Naive thymus-derived CD4-positive, alpha-beta T cell (primary cell): ENCODE measurements at regions of chr4 and their contacts with region 1.

Region 1: DNA sequence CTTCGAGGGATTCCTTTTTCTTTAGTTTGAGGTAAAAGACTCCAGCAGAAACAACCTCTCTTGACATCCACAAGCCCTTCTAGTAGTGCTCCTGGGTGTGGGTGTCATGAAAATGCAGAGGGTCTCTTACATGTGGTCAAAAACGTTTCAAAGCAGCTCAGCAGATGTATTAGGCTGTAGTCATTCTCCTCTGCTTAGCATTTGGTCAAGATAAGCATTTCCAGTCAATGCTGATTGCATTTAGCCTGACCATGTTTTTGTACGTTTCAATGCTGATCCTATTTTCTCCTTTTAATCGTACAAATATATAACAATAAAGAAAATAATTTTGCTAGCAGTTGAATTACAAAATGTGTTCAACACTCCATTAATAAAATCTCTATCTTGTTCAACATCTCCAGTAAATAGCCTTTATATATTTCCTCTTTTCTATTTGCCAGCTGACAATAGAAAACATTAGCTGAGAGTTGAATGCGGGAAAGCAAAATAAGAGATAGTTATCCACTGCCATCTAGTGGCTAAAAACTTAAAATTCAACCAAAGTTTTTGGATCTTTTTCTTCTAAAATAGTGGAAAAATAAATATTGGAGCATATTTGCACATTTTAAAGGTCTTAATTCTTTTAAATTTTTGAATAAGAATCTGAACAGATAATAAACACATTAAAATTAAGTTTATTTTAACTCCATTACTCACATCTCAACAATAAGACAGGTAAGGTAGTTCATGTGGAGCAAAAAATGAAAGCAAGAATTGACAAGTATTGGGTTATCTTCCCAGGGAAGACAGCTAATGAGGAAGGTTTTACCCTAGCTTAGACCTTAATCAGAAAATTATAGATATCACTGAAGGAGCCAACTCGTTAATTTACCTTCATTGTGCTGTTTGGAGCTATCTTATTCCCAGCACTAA is 15.2 kb upstream of the PACRGL start:
- DNase-seq: peak in 4 of 9 donors; percentile 7 to 27 (median 24)
- ATAC-seq: peak; percentile 37
- H3K4me3 ChIP-seq: no peak overlapping the region
- H3K4me3 Mint-ChIP-seq: no peak overlapping the region
- H3K27ac ChIP-seq: no peak overlapping the region
- H3K27ac Mint-ChIP-seq: no peak overlapping the region
- H3K4me1 ChIP-seq: no peaks in the 10 kb centered on the region
- H3K4me1 Mint-ChIP-seq: no peaks in the 10 kb centered on the region
- H3K27me3 ChIP-seq: peaks cover 0 to 3% of the 10 kb centered on the region in 2 donors
- H3K27me3 Mint-ChIP-seq: peaks cover 0 to 17% (median 14%) of the 10 kb centered on the region in 5 donors

Region 2: DNA sequence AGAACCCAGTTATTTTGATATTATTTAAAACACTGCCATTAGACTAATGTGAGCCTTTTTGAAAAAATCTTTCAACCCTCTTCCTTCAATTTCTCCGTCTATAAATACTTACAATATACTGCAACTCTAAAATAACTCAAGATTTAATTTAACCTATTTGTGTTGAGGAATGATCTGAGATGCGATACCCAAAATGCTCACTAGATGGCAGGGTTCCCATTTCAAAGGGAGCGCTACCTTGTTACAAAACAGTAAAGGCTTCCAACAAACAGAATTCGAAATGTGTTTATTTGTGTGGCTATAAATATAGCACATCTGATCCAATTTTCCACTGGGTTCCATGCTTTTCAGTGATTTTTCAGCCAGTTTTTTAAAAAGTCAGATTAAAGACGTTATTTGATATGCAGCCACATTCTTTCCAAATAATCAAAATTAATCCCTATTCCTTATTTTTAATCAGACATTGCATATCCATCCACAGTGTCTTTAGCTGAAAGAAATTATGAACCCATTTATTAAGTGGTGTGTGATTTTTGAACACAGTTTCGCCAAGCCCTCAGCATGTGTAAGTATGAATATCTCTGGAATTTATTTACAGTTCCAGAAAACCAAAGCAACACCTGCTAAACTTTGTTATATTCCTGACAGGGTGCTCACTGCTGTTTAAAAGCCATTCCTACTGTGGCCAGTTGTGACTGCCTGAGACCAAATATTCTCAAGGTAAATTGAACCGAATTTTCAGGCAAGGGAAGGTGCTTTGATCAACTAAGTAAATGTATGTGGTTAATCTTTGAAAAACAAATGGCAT is 1995.6 kb before region 1 on chr4:
- CTCF ChIA-PET with region 1: no interaction called
- POLR2A ChIA-PET with region 1: no interaction called
- intact Hi-C with region 1: loop called in 1 of 2 experiments (anchors 2 kb)
- DNase-seq: peak in 8 of 9 donors; percentile 3 to 28 (median 14)
- ATAC-seq: no peak
- H3K4me3 ChIP-seq: no peak overlapping the region
- H3K4me3 Mint-ChIP-seq: no peak overlapping the region
- H3K27ac ChIP-seq: no peak overlapping the region
- H3K27ac Mint-ChIP-seq: no peak overlapping the region
- H3K4me1 ChIP-seq: no peaks in the 10 kb centered on the region
- H3K4me1 Mint-ChIP-seq: no peaks in the 10 kb centered on the region
- H3K27me3 ChIP-seq: peaks cover 3 to 10% of the 10 kb centered on the region in 2 donors
- H3K27me3 Mint-ChIP-seq: peaks cover 7 to 21% (median 9%) of the 10 kb centered on the region in 5 donors

Region 3: GRCh38 chr4:19224820-19225219 is 1460.3 kb before region 1 on chr4:
- CTCF ChIA-PET with region 1: no interaction called
- POLR2A ChIA-PET with region 1: no interaction called
- intact Hi-C with region 1: loop called in 1 of 2 experiments (anchors 5 kb)
- DNase-seq: no peak
- ATAC-seq: no peak
- H3K4me3 ChIP-seq: no peak overlapping the region
- H3K4me3 Mint-ChIP-seq: no peak overlapping the region
- H3K27ac ChIP-seq: no peak overlapping the region
- H3K27ac Mint-ChIP-seq: no peak overlapping the region
- H3K4me1 ChIP-seq: no peaks in the 10 kb centered on the region
- H3K4me1 Mint-ChIP-seq: no peaks in the 10 kb centered on the region
- H3K27me3 ChIP-seq: no peaks in the 10 kb centered on the region
- H3K27me3 Mint-ChIP-seq: no peaks in the 10 kb centered on the region

Region 4: DNA sequence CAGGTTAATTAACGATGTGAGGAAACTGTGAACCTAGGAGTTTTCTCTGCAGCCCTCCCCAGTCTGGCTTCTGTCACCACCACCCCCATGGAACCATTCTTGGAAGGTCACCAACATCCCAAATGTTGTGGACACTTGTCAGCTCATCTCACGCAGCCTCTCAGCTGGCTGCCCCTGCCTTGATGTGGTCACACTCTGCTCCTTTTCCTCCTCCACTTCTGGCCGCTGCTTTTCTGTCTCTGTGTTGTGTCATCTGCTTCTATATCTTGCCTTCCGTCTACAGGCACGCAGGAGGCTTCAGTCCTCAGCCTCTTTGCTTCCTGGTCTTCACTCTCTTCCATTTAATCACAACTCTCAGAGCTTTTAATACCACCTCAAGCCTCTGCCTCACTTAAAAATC is 804.9 kb before region 1 on chr4:
- CTCF ChIA-PET with region 1: no interaction called
- POLR2A ChIA-PET with region 1: no interaction called
- intact Hi-C with region 1: no loop called
- DNase-seq: no peak
- ATAC-seq: no peak
- H3K4me3 ChIP-seq: no peak overlapping the region
- H3K4me3 Mint-ChIP-seq: no peak overlapping the region
- H3K27ac ChIP-seq: no peak overlapping the region
- H3K27ac Mint-ChIP-seq: no peak overlapping the region
- H3K4me1 ChIP-seq: no peaks in the 10 kb centered on the region
- H3K4me1 Mint-ChIP-seq: no peaks in the 10 kb centered on the region
- H3K27me3 ChIP-seq: no peaks in the 10 kb centered on the region
- H3K27me3 Mint-ChIP-seq: no peaks in the 10 kb centered on the region

Region 5: GRCh38 chr4:20395160-20395773 is 289.8 kb before region 1 on chr4:
- CTCF ChIA-PET with region 1: no interaction called
- POLR2A ChIA-PET with region 1: no interaction called
- intact Hi-C with region 1: loop called (anchors 1 kb)
- DNase-seq: no peak
- ATAC-seq: no peak
- H3K4me3 ChIP-seq: no peak overlapping the region
- H3K4me3 Mint-ChIP-seq: no peak overlapping the region
- H3K27ac ChIP-seq: no peak overlapping the region
- H3K27ac Mint-ChIP-seq: no peak overlapping the region
- H3K4me1 ChIP-seq: no peaks in the 10 kb centered on the region
- H3K4me1 Mint-ChIP-seq: no peaks in the 10 kb centered on the region
- H3K27me3 ChIP-seq: no peaks in the 10 kb centered on the region
- H3K27me3 Mint-ChIP-seq: peaks cover 0 to 9% (median 0%) of the 10 kb centered on the region in 5 donors

Region 6: GRCh38 chr4:21765810-21766407 is 1080.8 kb after region 1 on chr4:
- CTCF ChIA-PET with region 1: no interaction called
- POLR2A ChIA-PET with region 1: no interaction called
- intact Hi-C with region 1: loop called in 1 of 2 experiments (anchors 10 kb)
- DNase-seq: peak in 2 of 9 donors; percentile 11 to 12
- ATAC-seq: peak; percentile 59
- H3K4me3 ChIP-seq: no peak overlapping the region
- H3K4me3 Mint-ChIP-seq: no peak overlapping the region
- H3K27ac ChIP-seq: no peak overlapping the region
- H3K27ac Mint-ChIP-seq: peak overlapping the region in 1 of 9 donors; percentile 68
- H3K4me1 ChIP-seq: no peaks in the 10 kb centered on the region
- H3K4me1 Mint-ChIP-seq: peaks cover 0 to 3% (median 0%) of the 10 kb centered on the region in 7 donors
- H3K27me3 ChIP-seq: no peaks in the 10 kb centered on the region
- H3K27me3 Mint-ChIP-seq: peaks cover 0 to 17% (median 7%) of the 10 kb centered on the region in 5 donors